ENCODE measurements at regions of chr17 and their contacts with region 1.

Region 1: DNA sequence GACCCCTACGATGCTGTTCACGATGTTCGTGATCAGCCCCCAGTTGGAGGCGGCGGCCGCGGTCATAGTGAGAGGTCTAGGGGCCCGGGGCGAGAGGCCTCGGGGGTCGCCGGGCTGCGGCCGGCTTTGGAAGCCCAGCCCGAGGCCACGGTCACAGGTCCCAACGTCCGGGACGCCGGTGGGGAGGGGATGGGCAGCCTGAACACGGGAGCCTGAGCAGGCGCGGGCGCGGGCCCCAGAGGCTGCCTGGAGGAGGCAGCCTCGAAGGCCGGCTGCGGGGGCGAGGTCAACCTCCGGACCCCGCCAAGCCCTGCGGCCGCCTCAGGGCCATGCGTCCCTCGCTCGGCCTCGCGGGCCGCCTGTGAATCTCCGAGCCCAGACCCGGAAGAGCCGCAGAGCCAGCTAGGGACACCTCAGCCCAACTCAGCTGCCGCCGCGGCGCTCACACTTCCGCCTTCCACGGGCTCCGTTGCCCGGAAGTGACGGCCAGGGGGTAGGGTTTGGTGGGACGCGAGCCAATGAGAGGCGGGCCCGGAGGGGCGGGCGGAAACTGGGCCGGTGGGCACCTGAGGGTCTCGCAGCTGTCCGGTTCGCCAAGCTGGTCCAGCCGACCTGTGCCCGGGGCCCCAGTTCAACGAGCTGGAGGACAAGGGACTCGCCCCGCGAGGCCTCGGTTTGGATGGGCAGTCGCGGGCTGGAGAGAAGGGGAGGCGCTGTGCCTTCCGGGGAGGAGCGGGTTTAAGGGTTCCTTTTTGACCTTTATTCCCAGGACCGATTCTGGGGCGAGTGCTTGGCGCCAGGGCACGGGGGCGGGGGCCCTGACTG is at the start of gene SLC38A10:
- DNase-seq: no peak
- H3K4me3 ChIP-seq: peak within 1 kb of the TSS; percentile 92
- H3K27me3 ChIP-seq: no peaks in the 10 kb centered on the region
- CTCF ChIP-seq: peak; percentile 26
- polyA plus RNA-seq, gene SLC38A10: 34.6 and 55.4 TPM in 2 replicates

Region 2: GRCh38 chr17:81165246-81166032 is 129.6 kb before region 1 on chr17 and contains the start of gene PVALEF:
- CTCF ChIA-PET with region 1: no interaction called
- POLR2A ChIA-PET with region 1: no interaction called
- DNase-seq: no peak
- H3K4me3 ChIP-seq: peak within 1 kb of the TSS; percentile 23
- H3K27me3 ChIP-seq: peaks cover 24% of the 10 kb centered on the region
- CTCF ChIP-seq: no peak
- polyA plus RNA-seq, gene PVALEF: not detected in 2 replicates

Region 3: GRCh38 chr17:81270279-81270678 is 24.8 kb before region 1 on chr17:
- CTCF ChIA-PET with region 1: no interaction called
- POLR2A ChIA-PET with region 1: no interaction called
- DNase-seq: no peak
- H3K4me3 ChIP-seq: no peak overlapping the region
- H3K27me3 ChIP-seq: no peaks in the 10 kb centered on the region
- CTCF ChIP-seq: no peak

Region 4: DNA sequence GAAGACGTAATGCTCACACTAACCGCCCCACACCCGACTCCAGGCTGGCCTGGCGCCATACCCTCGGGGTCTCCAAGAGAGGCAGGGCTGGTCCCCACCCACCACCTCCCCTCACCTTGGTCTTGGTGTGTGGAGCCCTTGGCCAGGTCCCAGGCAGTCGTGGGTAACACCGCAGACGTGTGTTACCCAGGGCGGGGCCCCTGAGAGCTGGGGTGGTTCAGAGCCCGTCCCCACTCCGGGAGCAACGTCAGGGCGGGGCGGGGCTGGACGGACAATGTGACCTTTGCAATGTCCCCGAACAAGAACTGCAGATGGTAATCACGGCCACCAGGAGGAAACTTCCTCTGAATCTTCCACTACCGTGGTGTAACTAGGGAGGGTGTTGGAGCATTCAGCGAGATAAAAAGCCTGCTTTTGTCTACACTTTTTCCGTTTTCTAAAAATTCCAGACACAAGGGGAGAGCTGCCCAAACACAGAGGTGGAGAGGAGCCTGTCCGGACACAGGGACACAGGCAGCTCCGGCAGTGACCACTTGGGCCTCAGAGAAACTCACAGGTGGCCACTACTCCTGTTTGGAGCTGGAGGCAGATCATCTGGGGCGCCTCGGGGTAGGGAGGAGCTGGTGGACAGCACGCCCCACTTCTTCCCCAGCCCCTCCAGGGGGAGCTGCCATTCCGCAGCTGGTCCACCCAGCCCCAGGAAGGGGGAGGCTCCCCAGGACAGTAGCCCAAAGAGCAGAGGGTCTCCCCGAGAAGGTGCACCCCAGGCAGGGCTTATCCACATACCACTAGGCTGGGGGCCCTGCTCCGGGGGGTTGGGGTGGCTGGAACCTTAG is 14.2 kb after region 1 on chr17:
- CTCF ChIA-PET with region 1: interaction called, 15 read pairs
- POLR2A ChIA-PET with region 1: no interaction called
- DNase-seq: no peak
- H3K4me3 ChIP-seq: peak overlapping the region; percentile 13; the same call in 1 of the 2 replicates
- H3K27me3 ChIP-seq: no peaks in the 10 kb centered on the region
- CTCF ChIP-seq: peak; percentile 44